OCI-LY7 (cell line): ENCODE measurements at regions of chr20 and their contacts with region 1.

Region 1: DNA sequence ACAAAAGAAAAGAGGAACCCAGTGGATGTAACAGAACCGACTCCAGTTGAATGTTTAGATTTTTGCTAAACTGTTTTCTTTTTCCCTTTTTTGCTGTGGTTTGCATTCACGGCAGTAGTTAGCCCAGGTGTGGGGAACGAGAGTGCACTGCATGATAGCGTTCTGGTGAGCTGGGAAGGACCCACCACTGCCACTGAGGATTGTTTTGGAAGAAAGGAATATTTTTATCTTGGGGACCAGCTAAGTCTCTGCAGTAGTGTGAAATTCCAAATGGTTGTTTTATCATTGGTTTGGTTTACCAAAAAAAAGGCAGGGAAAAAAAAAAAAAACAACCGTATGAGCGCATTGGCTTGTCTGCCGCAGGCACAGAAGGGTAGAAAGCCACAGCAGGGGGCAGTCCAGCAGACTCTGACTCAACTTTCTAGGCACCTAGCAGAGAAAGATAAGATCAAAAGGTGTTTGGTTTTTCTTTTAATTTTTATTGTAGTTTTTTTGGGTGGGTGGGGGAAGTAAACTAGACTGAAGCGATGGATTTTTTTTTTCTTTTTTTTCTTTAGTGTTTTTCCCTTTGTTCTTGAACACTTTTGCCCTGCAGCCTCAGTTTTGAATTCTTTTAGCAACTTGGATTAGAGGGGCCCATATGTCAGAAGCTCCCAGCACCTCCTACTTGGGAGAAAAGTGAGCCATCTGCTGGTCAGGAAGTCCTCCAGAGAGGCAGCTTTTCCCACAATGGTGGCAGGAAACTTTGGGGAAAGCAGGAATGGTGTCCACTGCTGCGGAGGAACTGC is 13.5 kb upstream of the RAB5IF start:
- DNase-seq: no peak
- H3K4me3 ChIP-seq: no peak overlapping the region
- H3K27ac ChIP-seq: no peak overlapping the region
- H3K4me1 ChIP-seq: peaks cover 55% of the 10 kb centered on the region
- CTCF ChIP-seq: peak; percentile 70

Region 2: GRCh38 chr20:36550797-36551299 is 41.2 kb before region 1 on chr20:
- CTCF ChIA-PET with region 1: no interaction called
- POLR2A ChIA-PET with region 1: no interaction called
- intact Hi-C with region 1: loop called (anchors 1 kb)
- DNase-seq: no peak
- H3K4me3 ChIP-seq: no peak overlapping the region
- H3K27ac ChIP-seq: no peak overlapping the region
- H3K4me1 ChIP-seq: peaks cover 13% of the 10 kb centered on the region
- CTCF ChIP-seq: no peak

Region 3: GRCh38 chr20:36573103-36573794 is 18.8 kb before region 1 on chr20 and contains the start of gene TGIF2:
- CTCF ChIA-PET with region 1: no interaction called
- POLR2A ChIA-PET with region 1: interaction called, 15 read pairs
- intact Hi-C with region 1: loop called (anchors 1 kb)
- DNase-seq: peak; percentile 95
- H3K4me3 ChIP-seq: peak within 1 kb of the TSS; percentile 88
- H3K27ac ChIP-seq: peak within 1 kb of the TSS; percentile 69
- H3K4me1 ChIP-seq: peaks cover 25% of the 10 kb centered on the region
- CTCF ChIP-seq: no peak
- total RNA-seq, gene TGIF2: 26.6 and 41.3 TPM in 2 replicates

Region 4: GRCh38 chr20:36578356-36579041 is 13.5 kb before region 1 on chr20:
- CTCF ChIA-PET with region 1: no interaction called
- POLR2A ChIA-PET with region 1: interaction called, 15 read pairs
- intact Hi-C with region 1: loop called (anchors 1 kb)
- DNase-seq: no peak
- H3K4me3 ChIP-seq: no peak overlapping the region
- H3K27ac ChIP-seq: no peak overlapping the region
- H3K4me1 ChIP-seq: peaks cover 6% of the 10 kb centered on the region
- CTCF ChIP-seq: no peak

Region 5: DNA sequence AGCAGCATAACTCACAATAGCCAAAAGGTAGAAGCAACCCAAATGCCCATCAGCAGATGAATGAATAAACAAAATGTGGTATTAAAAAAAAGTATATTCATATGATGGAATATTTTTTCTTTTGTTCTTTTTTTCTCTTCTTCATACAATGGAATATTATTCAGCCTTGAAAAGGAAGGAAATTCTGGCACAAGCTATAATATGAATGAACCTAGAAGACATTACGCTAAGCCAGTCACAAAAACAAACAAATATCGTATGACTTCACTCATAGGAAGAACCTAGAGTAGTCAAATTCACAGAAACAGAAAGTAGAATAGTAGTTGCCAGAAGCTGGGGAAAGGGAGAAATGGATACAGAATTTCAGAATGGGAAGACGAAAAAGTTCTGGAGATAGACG is 440.0 kb after region 1 on chr20:
- CTCF ChIA-PET with region 1: no interaction called
- POLR2A ChIA-PET with region 1: no interaction called
- intact Hi-C with region 1: no loop called
- DNase-seq: no peak
- H3K4me3 ChIP-seq: no peak overlapping the region
- H3K27ac ChIP-seq: no peak overlapping the region
- H3K4me1 ChIP-seq: no peaks in the 10 kb centered on the region
- CTCF ChIP-seq: no peak